ENCODE measurements at regions of chr14 and their contacts with region 1.

Region 1: GRCh38 chr14:104795788-104796686 is 489 bp upstream of the AKT1 start:
- DNase-seq: peak; percentile 50 to 75 (median 73)
- H3K4me3 ChIP-seq: peak overlapping the region; percentile 49
- H3K27ac ChIP-seq: peak overlapping the region; percentile 69 to 92
- H3K4me1 ChIP-seq: peaks cover 14% of the 10 kb centered on the region
- H3K27me3 ChIP-seq: no peaks in the 10 kb centered on the region
- CTCF ChIP-seq: no peak
- EP300 ChIP-seq: no peak
- POLR2A ChIP-seq: peak; percentile 80

Region 2: GRCh38 chr14:104240434-104241157 is 555.4 kb before region 1 on chr14:
- intact Hi-C with region 1: no loop called
- DNase-seq: peak in 1 of 5 donors; percentile 2
- H3K4me3 ChIP-seq: no peak overlapping the region
- H3K27ac ChIP-seq: no peak overlapping the region
- H3K4me1 ChIP-seq: peaks cover 6% of the 10 kb centered on the region
- H3K27me3 ChIP-seq: no peaks in the 10 kb centered on the region
- CTCF ChIP-seq: no peak
- EP300 ChIP-seq: no peak
- POLR2A ChIP-seq: no peak

Region 3: GRCh38 chr14:104436047-104436591 is 359.9 kb before region 1 on chr14:
- intact Hi-C with region 1: no loop called
- DNase-seq: peak; percentile 70 to 88 (median 87)
- H3K4me3 ChIP-seq: no peak overlapping the region
- H3K27ac ChIP-seq: peak overlapping the region; percentile 51 to 73
- H3K4me1 ChIP-seq: peaks cover 9% of the 10 kb centered on the region
- H3K27me3 ChIP-seq: no peaks in the 10 kb centered on the region
- CTCF ChIP-seq: no peak
- EP300 ChIP-seq: no peak
- POLR2A ChIP-seq: no peak

Region 4: GRCh38 chr14:104865644-104866441 is 69.8 kb after region 1 on chr14:
- intact Hi-C with region 1: loop called in 1 of 4 experiments (anchors 1 kb)
- DNase-seq: peak; percentile 55 to 76 (median 67)
- H3K4me3 ChIP-seq: peak overlapping the region; percentile 54
- H3K27ac ChIP-seq: no peak overlapping the region
- H3K4me1 ChIP-seq: peaks cover 11% of the 10 kb centered on the region
- H3K27me3 ChIP-seq: no peaks in the 10 kb centered on the region
- CTCF ChIP-seq: no peak
- EP300 ChIP-seq: no peak
- POLR2A ChIP-seq: no peak

Region 5: DNA sequence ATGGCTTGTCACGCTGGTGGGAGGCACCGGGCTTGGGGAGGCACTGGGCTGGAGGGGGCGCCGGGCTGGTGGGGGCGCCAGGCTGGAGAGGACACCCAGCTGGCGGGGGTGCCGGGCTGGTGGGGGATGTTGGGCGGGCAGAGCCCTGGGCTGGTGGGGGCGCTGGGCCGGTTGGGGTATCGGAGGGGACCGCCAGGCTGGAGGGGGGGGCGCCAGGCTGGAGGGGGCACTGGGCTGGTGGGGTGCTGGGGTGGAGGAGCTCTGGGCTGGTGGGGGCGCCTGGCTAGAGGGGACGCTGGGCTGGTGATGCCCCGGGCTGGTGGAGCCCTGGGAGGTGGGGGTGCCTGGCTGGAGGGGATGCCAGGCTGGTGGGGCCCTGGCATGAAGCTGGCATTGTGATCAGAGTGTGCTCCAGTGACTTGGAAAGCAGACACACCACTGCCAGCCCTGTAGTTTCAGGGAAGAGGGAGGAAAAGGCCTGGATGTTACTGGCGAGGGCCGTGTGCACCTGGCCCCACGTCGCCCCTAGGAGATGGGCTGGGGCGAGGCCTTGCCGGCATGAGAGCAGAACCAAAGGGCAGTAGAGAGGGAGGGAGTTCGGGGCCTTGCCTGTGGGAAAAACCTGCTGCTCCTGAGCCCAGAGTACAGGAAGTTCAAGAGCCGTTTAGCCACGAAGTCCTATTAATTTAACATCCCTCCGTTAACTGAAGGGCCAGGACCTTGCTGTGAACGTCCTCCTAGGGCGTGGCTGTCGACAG is 708.1 kb after region 1 on chr14:
- intact Hi-C with region 1: no loop called
- DNase-seq: no peak
- H3K4me3 ChIP-seq: no peak overlapping the region
- H3K27ac ChIP-seq: no peak overlapping the region
- H3K4me1 ChIP-seq: no peaks in the 10 kb centered on the region
- H3K27me3 ChIP-seq: no peaks in the 10 kb centered on the region
- CTCF ChIP-seq: no peak
- EP300 ChIP-seq: no peak
- POLR2A ChIP-seq: no peak

Measured in ovary (tissue), 10 donors.